CD4-positive, alpha-beta T cell (primary cell): ENCODE measurements at regions of chr9 and their contacts with region 1.

Region 1: GRCh38 chr9:135907431-135908092 is at the start of gene CAMSAP1:
- DNase-seq: peak; percentile 89 to 99 (median 96)
- ATAC-seq: peak; percentile 88
- H3K4me3 ChIP-seq: peak within 1 kb of the TSS; percentile 79
- H3K4me3 Mint-ChIP-seq: peak within 1 kb of the TSS; percentile 94
- H3K27ac ChIP-seq: peak within 1 kb of the TSS in 1 of 2 donors; percentile 61
- H3K27ac Mint-ChIP-seq: peak within 1 kb of the TSS; percentile 78
- H3K4me1 ChIP-seq: peaks cover 46% of the 10 kb centered on the region
- H3K4me1 Mint-ChIP-seq: peaks cover 57% of the 10 kb centered on the region
- H3K27me3 ChIP-seq: no peaks in the 10 kb centered on the region
- H3K27me3 Mint-ChIP-seq: no peaks in the 10 kb centered on the region
- CTCF ChIP-seq: no peak
- total RNA-seq, gene CAMSAP1: 16.8 to 18.2 TPM

Region 2: GRCh38 chr9:134067904-134068743 is 1839.4 kb before region 1 on chr9 and contains the start of gene BRD3:
- CTCF ChIA-PET with region 1: no interaction called
- POLR2A ChIA-PET with region 1: no interaction called
- intact Hi-C with region 1: loop called in 1 of 2 experiments (anchors 10 kb)
- DNase-seq: peak; percentile 63 to 96 (median 78)
- ATAC-seq: peak; percentile 76
- H3K4me3 ChIP-seq: peak within 1 kb of the TSS; percentile 79
- H3K4me3 Mint-ChIP-seq: peak within 1 kb of the TSS; percentile 97
- H3K27ac ChIP-seq: peak within 1 kb of the TSS; percentile 79 to 84
- H3K27ac Mint-ChIP-seq: peak within 1 kb of the TSS; percentile 98
- H3K4me1 ChIP-seq: peaks cover 47% of the 10 kb centered on the region
- H3K4me1 Mint-ChIP-seq: peaks cover 37% of the 10 kb centered on the region
- H3K27me3 ChIP-seq: peaks cover 9 to 15% of the 10 kb centered on the region in 2 experiments
- H3K27me3 Mint-ChIP-seq: peaks cover 22% of the 10 kb centered on the region
- CTCF ChIP-seq: no peak
- total RNA-seq, gene BRD3: 26.7 to 29.0 TPM

Region 3: GRCh38 chr9:135864447-135865049 is 43.0 kb before region 1 on chr9:
- CTCF ChIA-PET with region 1: interaction called, 4 read pairs
- POLR2A ChIA-PET with region 1: interaction called, 4 read pairs
- intact Hi-C with region 1: loop called (anchors 1 to 2 kb)
- DNase-seq: peak; percentile 59 to 82 (median 70)
- ATAC-seq: peak; percentile 74
- H3K4me3 ChIP-seq: no peak overlapping the region
- H3K4me3 Mint-ChIP-seq: no peak overlapping the region
- H3K27ac ChIP-seq: no peak overlapping the region
- H3K27ac Mint-ChIP-seq: no peak overlapping the region
- H3K4me1 ChIP-seq: peaks cover 7% of the 10 kb centered on the region
- H3K4me1 Mint-ChIP-seq: peaks cover 13% of the 10 kb centered on the region
- H3K27me3 ChIP-seq: no peaks in the 10 kb centered on the region
- H3K27me3 Mint-ChIP-seq: no peaks in the 10 kb centered on the region
- CTCF ChIP-seq: peak; percentile 83

Region 4: DNA sequence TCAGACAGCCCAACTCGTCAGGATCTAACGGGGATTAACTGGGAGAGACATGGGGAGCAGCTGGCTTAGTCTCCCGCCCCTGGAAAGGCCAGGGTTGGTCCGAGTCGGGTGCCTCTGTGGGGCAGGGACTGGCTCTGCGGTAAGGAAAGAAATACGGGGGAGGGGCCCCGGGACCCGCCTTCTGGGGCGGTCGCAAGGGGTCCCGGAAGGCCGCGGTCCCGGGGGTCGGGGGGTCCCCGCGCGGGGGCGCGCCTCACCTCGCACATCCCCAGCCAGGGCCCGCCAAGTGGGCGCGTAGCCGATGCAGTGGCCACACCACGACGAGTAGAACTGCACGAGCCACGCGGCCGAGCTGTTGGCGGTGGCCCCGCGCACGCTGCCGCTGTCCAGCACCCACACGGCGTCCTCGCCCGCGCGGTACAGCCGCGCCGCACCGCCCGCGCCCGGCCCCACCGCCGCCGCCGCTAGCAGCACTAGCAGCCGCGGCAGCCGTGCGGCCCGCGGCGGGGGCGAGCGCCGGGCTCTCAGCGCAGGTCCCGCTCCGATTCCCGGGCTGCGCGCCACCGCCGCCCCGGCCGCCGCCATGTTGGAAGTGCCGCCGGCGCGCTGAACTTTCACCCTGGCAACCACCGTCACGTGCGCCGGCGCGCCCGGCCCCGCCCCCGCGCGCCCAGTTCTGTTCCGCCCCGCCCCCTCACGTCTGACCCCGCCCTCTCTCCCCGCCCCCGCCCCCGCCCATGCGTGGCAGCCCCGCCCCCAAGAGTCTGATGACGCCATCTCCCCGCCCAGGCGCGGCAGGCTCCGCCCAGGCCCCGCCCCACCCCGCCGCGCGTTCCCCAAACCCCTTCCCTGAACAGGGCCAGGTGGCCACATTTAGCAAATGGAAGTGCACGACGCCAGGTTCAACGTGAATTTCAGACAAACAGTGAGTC is 337.9 kb after region 1 on chr9 and contains the start of gene QSOX2:
- CTCF ChIA-PET with region 1: no interaction called
- POLR2A ChIA-PET with region 1: no interaction called
- intact Hi-C with region 1: loop called in 1 of 2 experiments (anchors 5 kb)
- DNase-seq: peak; percentile 73 to 94 (median 84)
- ATAC-seq: peak; percentile 81
- H3K4me3 ChIP-seq: peak within 1 kb of the TSS; percentile 63
- H3K4me3 Mint-ChIP-seq: peak within 1 kb of the TSS; percentile 94
- H3K27ac ChIP-seq: peak within 1 kb of the TSS; percentile 15 to 20
- H3K27ac Mint-ChIP-seq: peak within 1 kb of the TSS; percentile 76
- H3K4me1 ChIP-seq: peaks cover 39% of the 10 kb centered on the region
- H3K4me1 Mint-ChIP-seq: peaks cover 41% of the 10 kb centered on the region
- H3K27me3 ChIP-seq: no peaks in the 10 kb centered on the region
- H3K27me3 Mint-ChIP-seq: no peaks in the 10 kb centered on the region
- CTCF ChIP-seq: no peak
- total RNA-seq, gene QSOX2: 14.4 TPM